ENCODE measurements at regions of chr2 and their contacts with region 1.

Region 1: GRCh38 chr2:227655454-227655853 is 11.2 kb upstream of the SCYGR5 start:
- DNase-seq: no peak
- ATAC-seq: peak; percentile 92

Region 2: DNA sequence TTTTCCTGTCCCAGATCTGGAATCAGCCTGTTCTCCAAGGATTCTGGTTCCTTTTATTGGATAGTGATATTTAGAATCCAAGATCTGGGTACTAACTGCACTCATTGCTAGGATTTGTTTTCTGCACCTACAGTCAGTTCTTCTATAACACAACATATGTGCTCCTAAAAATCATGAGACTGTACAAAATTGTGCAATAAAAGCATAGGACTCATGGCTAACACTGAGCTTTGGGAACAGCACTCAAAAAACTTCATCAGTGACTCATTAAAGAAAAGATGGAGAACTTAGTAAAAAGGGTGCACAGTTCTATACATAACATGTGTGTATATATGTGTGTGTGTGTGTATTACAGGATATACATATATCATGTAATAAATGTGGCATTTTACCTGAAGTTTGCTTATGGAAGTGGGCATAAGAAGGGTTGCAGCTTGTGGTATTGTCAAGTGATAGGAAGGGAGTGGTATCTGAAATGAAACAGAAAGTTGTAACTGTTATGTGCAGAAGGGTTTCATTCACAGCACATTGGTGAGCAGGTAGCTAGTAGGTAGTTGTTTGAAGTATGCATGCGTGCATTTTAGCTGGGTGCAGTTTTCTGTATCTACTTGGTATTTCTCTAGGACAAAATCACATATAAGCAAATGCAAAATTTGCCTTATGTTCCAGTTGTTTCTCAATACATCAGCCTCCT is 62.6 kb before region 1 on chr2:
- intact Hi-C with region 1: no loop called
- DNase-seq: no peak
- ATAC-seq: no peak

Region 3: DNA sequence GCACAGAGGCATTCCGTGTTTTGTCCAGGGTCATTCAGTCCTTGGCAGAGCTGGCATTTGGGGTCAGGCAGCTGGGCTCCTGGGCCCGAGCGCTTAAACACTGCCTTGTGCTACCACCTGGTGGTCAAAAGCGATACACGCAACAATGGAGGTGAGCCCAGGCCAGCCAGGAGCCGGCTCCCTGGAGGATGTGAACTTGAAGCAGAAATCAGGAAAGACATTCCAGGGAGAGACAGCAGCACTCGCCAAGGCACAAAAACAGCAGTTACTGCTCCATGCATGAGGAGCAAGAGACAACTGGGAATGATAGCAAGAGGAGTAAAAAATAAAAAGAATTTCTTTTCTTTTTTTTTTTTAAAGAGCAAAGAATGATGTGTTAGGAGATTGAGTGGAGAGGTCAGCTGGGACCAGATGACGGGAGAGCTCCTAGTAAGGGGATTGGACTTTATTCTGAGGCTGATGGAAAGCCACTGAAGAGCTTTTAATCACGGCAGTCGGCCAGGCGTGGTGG is 111.0 kb after region 1 on chr2:
- intact Hi-C with region 1: loop called (anchors 10 kb)
- DNase-seq: peak; percentile 88
- ATAC-seq: peak; percentile 96

Region 4: DNA sequence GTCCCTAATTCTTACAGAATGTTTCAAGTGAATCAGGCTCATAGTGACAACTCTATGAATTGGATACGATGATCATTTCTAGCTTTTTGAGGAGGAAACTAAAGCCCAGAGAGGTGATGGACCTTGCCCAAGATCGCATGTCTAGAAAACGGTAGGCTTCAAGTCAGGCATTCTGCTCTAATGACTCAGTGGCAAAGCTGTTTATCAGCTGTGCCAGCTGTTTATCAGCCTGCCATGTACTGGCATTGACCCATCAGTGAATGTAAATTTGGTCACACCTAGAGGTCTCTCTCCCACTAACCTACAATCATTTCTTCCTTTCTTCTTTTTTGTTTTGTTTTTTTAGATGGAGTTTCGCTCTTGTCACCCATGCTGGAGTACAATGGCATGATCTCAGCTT is 209.8 kb after region 1 on chr2:
- intact Hi-C with region 1: loop called (anchors 5 kb)
- DNase-seq: no peak
- ATAC-seq: no peak

Measured in sciatic nerve (tissue), 2 donors.